ENCODE measurements at regions of chr2 and their contacts with region 1.

Region 1: GRCh38 chr2:64644177-64645004 is 9.3 kb downstream of the SERTAD2 start:
- DNase-seq: peak; percentile 85 to 94 (median 91)
- ATAC-seq: peak; percentile 94 to 96
- H3K4me3 ChIP-seq: peak overlapping the region; percentile 44
- H3K27ac ChIP-seq: peak overlapping the region; percentile 94
- H3K4me1 ChIP-seq: peaks cover 14% of the 10 kb centered on the region
- H3K27me3 ChIP-seq: no peaks in the 10 kb centered on the region

Region 2: DNA sequence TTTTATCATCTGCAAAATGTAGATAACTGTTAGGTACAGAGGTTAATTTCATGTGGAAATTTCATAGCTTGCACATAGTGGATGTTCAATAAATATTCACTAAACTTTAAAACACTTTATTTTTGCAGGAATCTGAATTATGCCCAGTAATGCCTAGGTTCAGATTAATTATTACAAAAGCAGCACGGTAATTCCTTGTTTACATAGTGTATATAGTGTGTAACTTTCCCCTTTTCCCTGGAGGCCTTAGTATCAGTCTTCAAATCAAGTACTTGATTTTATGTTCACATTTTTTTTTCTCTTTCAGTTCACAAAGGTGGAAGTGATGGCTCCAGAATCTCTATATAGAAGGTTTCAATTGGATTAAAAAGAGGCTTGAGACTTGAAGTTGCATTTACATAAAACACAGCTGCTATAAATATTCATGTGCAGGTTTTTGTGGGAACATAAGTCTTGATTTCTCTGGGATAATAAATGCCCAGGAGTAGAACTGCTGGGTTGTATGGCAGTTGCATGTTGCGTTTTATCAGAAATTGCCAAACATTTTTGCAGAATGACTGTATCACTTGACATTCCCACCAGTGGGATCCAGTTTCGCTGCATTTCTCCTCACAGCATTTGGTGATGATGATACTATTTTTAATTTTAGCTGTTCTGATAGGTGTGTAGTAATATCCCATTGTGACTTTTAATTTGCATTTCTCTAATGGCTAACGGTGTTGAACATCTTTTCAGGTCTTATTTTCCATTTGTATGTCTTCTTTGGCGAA is 218.0 kb before region 1 on chr2:
- intact Hi-C with region 1: no loop called
- DNase-seq: no peak
- ATAC-seq: no peak
- H3K4me3 ChIP-seq: no peak overlapping the region
- H3K27ac ChIP-seq: no peak overlapping the region
- H3K4me1 ChIP-seq: no peaks in the 10 kb centered on the region
- H3K27me3 ChIP-seq: no peaks in the 10 kb centered on the region

Region 3: GRCh38 chr2:64586883-64587481 is 57.4 kb before region 1 on chr2:
- intact Hi-C with region 1: no loop called
- DNase-seq: no peak
- ATAC-seq: peak; percentile 66 to 70
- H3K4me3 ChIP-seq: no peak overlapping the region
- H3K27ac ChIP-seq: no peak overlapping the region
- H3K4me1 ChIP-seq: peaks cover 1% of the 10 kb centered on the region
- H3K27me3 ChIP-seq: no peaks in the 10 kb centered on the region

Region 4: DNA sequence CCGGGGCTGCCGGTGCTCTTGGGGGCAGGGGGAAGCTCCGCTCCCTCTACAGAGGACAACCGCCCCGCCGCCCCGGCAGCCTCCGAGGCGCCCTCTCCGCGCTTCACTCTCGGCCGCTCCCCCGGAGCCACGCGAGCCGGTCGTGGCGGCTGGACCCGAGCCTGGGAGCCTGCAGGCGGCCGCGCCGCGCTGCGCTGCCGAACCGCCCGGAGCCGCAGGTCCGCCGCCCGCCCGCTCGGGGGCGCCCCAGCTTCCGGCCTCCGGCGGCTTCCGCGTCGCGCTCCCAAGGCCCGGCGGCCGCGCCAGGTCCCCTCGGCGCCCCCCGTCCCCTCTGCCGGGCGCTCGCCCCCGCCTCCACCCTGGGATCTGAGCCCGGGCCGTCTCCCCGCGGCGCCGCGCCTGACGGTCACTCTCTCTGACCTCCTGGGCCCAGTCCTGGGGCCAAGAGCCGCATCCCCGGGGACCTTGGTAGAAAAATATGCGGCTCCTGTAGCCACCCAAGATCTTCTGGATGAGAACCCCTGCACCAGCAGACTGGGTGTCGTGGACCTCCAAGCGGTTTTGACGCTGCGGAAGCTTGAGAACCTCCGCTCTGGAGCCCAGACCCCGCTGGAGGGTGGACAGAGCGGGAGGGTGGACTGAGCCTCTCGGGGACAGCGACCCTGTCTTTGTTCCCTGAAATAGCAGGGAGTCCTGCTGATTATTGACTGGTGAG is 35.0 kb before region 1 on chr2:
- intact Hi-C with region 1: loop called in 1 of 4 experiments (anchors 5 kb)
- DNase-seq: peak; percentile 70 to 90 (median 87)
- ATAC-seq: peak; percentile 63 to 71
- H3K4me3 ChIP-seq: peak overlapping the region; percentile 51
- H3K27ac ChIP-seq: no peak overlapping the region
- H3K4me1 ChIP-seq: peaks cover 2% of the 10 kb centered on the region
- H3K27me3 ChIP-seq: no peaks in the 10 kb centered on the region

Region 5: GRCh38 chr2:64831134-64831976 is 187.0 kb after region 1 on chr2:
- intact Hi-C with region 1: loop called in 1 of 4 experiments (anchors 10 kb)
- DNase-seq: peak; percentile 93 to 96 (median 95)
- ATAC-seq: peak; percentile 96 to 98
- H3K4me3 ChIP-seq: no peak overlapping the region
- H3K27ac ChIP-seq: peak overlapping the region; percentile 63
- H3K4me1 ChIP-seq: no peaks in the 10 kb centered on the region
- H3K27me3 ChIP-seq: no peaks in the 10 kb centered on the region

Measured in right cardiac atrium (tissue), 5 donors.